ENCODE measurements at regions of chr17 and their contacts with region 1.

Region 1: GRCh38 chr17:51298508-51299371 is 38.4 kb downstream of the UTP18 start:
- DNase-seq: peak; percentile 29 to 60 (median 42)
- ATAC-seq: peak; percentile 85
- H3K4me3 ChIP-seq: no peak overlapping the region
- H3K27ac ChIP-seq: no peak overlapping the region
- H3K4me1 ChIP-seq: no peaks in the 10 kb centered on the region
- H3K27me3 ChIP-seq: no peaks in the 10 kb centered on the region
- CTCF ChIP-seq: peak; percentile 65 to 86 (median 80)
- EP300 ChIP-seq: no peak
- POLR2A ChIP-seq: 0 out of 2 replicates have a peak, but pooled peaks have one; percentile 35
- RAD21 ChIP-seq: peak; percentile 74 to 76

Region 2: DNA sequence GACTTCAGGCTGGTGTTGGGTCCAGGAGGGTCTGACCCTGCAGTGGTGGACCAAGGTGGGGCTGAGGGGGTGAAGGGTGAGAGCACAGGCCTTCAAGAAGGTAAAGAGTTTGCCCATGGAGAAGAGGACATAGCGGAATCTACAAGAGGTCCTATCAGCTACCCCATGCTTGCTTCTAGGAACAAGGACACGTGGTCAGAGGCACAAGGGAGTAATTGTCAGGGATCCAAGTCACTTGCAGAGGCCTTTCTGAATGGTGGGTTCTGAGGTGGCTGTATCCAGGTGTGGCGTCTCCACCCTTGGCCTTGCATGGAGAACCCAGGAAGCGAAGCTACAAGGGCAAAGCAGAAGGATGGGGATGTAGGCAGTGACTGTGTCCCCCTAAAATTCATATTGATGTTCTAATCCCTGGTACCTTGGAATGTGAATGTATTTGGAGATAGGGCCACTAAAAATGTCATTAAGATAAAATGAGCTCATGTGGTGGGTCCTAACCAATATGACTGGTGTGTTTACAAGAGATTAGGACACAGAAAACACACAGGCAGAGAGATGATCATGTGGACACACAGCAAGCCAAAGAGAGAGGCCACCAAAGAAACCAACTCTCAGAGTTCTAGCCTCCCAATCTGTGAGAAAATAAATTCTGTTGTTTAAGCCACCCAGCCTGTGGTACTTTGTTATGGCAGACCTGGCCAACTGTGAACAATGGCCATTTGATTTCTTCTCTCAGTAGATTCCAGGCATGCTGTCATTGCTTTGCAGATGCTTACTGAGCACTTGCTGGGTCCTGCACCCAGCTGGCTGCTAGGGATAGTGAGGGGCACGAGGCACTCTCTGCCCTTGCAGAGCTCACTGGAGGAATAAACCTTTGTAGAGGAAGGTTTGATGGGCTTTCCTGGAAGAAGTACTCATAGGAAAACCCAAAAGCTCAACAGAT is 37.4 kb after region 1 on chr17:
- CTCF ChIA-PET with region 1: no interaction called
- POLR2A ChIA-PET with region 1: no interaction called
- in situ Hi-C with region 1: no loop called
- intact Hi-C with region 1: no loop called
- DNase-seq: peak in 1 of 4 experiments; percentile 20
- ATAC-seq: peak; percentile 58
- H3K4me3 ChIP-seq: no peak overlapping the region
- H3K27ac ChIP-seq: no peak overlapping the region
- H3K4me1 ChIP-seq: peaks cover 0 to 4% of the 10 kb centered on the region in 2 experiments; a peak in 2 of 5 replicates
- H3K27me3 ChIP-seq: peaks cover 2 to 24% of the 10 kb centered on the region in 2 experiments; a peak in 3 of 5 replicates
- CTCF ChIP-seq: no peak
- EP300 ChIP-seq: no peak
- POLR2A ChIP-seq: no peak
- RAD21 ChIP-seq: no peak

Region 3: GRCh38 chr17:51540151-51540550 is 241.4 kb after region 1 on chr17:
- CTCF ChIA-PET with region 1: no interaction called
- POLR2A ChIA-PET with region 1: no interaction called
- in situ Hi-C with region 1: no loop called
- intact Hi-C with region 1: loop called (anchors 2 kb)
- DNase-seq: peak in 2 of 4 experiments; percentile 7 to 8
- ATAC-seq: peak; percentile 58; the same call in 2 of the 3 replicates
- H3K4me3 ChIP-seq: no peak overlapping the region
- H3K27ac ChIP-seq: no peak overlapping the region
- H3K4me1 ChIP-seq: no peaks in the 10 kb centered on the region
- H3K27me3 ChIP-seq: no peaks in the 10 kb centered on the region
- CTCF ChIP-seq: peak; percentile 31 to 48 (median 40); a peak in 4 of 6 replicates
- EP300 ChIP-seq: no peak
- POLR2A ChIP-seq: no peak
- RAD21 ChIP-seq: peak; percentile 52 to 53